ENCODE measurements at regions of chr2 and their contacts with region 1.

Region 1: DNA sequence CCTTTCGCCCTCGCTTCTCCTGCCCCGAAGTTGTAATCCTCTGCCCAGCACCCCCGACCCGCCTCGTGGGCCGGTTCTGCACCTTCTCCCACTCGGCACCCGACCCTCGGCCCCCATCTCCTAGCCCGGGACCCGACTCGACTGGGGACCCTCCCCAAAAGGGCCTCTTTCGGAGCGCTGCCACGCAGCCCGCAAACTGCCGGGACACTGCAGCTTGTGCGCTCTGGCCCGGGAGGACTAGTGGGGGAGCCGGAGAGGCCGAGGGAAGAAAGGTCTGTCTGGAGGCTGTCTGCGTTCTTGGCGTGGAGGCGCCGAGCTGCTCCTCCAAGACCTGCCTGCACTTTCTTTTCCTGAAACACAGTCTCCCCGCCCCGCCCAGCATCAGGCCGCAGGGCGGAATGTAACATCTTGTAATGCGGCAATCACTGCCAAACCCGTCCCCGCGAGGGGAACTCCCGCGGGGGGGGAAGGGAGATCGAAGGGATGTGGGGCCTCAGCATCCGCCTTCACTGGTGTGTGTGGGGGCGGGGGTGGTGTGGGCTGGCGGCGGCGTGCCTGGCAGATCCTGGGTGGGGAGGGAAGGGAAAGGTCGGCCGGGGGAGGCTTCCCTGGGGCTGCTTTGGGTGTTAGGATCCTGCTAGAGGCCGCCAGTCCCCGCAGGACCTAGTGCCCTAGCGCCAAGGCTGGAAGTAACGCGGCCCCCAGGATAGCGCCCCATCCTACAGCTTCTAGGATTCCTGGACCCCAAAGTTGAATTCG is 7.4 kb downstream of the DLX2 start:
- DNase-seq: peak; percentile 91
- ATAC-seq: peak; percentile 47
- H3K4me3 ChIP-seq: peak overlapping the region; percentile 97
- H3K27ac ChIP-seq: peak overlapping the region; percentile 93
- H3K4me1 ChIP-seq: peaks cover 31% of the 10 kb centered on the region
- H3K27me3 ChIP-seq: no peaks in the 10 kb centered on the region
- CTCF ChIP-seq: no peak

Region 2: GRCh38 chr2:171811245-171811628 is 284.1 kb before region 1 on chr2:
- CTCF ChIA-PET with region 1: no interaction called
- POLR2A ChIA-PET with region 1: no interaction called
- intact Hi-C with region 1: no loop called
- DNase-seq: peak; percentile 57
- ATAC-seq: peak; percentile 82
- H3K4me3 ChIP-seq: no peak overlapping the region
- H3K27ac ChIP-seq: no peak overlapping the region
- H3K4me1 ChIP-seq: no peaks in the 10 kb centered on the region
- H3K27me3 ChIP-seq: no peaks in the 10 kb centered on the region
- CTCF ChIP-seq: peak; percentile 61

Region 3: DNA sequence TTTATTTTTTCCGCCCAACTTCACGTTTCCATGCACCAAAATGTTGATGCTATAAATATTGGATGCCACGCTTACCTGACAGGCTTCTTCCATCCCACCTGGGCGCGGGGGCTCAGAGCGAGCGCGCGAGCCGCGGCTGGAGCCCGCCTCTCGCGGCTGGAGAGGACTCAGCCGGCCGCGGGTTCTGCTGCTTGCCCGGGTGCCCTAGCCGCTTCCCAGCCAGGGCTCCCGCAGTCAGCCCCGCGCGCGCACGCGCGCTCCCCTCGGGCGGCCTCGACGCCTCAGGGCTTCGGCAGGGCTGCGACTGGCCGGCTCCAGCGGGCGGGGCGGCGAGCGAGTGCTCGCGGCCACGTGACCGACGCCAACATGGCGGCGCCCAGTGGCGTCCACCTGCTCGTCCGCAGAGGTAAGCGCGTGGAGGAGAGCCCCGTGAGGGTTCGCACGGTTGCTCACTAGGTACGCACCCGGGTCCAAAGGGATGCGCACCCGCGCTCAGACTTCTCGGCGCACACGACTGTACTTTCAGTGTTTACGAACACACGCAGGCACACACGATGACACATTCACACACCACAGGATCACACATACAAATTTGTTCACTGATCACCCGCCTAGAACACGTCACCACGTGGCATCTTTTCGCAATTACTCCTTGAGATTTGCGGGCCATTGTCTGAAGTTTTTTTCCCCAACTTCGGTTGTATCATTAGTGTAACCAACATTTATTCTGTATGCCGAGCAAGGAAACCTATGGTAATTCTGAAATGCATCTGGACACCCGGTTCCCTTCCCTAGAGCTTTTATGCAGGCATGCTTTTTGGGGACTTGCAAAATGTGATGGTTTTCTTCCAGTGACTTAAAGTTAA is 95.5 kb before region 1 on chr2 and contains the start of gene METAP1D:
- CTCF ChIA-PET with region 1: no interaction called
- POLR2A ChIA-PET with region 1: interaction called, 4 read pairs
- intact Hi-C with region 1: loop called (anchors 2 kb)
- DNase-seq: peak; percentile 94
- ATAC-seq: peak; percentile 93
- H3K4me3 ChIP-seq: peak within 1 kb of the TSS; percentile 74
- H3K27ac ChIP-seq: peak within 1 kb of the TSS; percentile 70
- H3K4me1 ChIP-seq: peaks cover 16% of the 10 kb centered on the region
- H3K27me3 ChIP-seq: no peaks in the 10 kb centered on the region
- CTCF ChIP-seq: no peak
- total RNA-seq, gene METAP1D: 7.3 and 12.0 TPM in 2 replicates

Region 4: DNA sequence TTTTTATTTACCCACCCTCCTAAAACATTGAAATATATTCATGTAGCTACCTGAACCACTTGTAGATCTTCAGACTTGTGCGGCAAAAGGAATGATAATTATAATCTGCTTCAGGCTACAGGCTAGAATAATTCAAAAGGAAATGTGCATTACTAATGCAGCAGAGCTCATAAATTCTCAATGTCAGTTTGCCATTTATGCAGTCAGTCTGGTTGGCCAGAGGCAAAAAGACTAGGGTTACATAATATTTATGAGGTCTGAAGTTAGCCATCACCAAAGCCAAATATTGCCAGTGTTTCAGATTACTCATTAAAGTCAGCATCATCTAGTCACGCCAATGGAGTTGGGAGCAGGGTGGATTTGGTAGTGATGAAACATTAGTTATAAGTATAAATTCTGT is 56.7 kb before region 1 on chr2:
- CTCF ChIA-PET with region 1: no interaction called
- POLR2A ChIA-PET with region 1: no interaction called
- intact Hi-C with region 1: loop called (anchors 2 kb)
- DNase-seq: peak; percentile 95
- ATAC-seq: peak; percentile 96
- H3K4me3 ChIP-seq: no peak overlapping the region
- H3K27ac ChIP-seq: peak overlapping the region; percentile 65
- H3K4me1 ChIP-seq: peaks cover 18% of the 10 kb centered on the region
- H3K27me3 ChIP-seq: no peaks in the 10 kb centered on the region
- CTCF ChIP-seq: no peak

Region 5: DNA sequence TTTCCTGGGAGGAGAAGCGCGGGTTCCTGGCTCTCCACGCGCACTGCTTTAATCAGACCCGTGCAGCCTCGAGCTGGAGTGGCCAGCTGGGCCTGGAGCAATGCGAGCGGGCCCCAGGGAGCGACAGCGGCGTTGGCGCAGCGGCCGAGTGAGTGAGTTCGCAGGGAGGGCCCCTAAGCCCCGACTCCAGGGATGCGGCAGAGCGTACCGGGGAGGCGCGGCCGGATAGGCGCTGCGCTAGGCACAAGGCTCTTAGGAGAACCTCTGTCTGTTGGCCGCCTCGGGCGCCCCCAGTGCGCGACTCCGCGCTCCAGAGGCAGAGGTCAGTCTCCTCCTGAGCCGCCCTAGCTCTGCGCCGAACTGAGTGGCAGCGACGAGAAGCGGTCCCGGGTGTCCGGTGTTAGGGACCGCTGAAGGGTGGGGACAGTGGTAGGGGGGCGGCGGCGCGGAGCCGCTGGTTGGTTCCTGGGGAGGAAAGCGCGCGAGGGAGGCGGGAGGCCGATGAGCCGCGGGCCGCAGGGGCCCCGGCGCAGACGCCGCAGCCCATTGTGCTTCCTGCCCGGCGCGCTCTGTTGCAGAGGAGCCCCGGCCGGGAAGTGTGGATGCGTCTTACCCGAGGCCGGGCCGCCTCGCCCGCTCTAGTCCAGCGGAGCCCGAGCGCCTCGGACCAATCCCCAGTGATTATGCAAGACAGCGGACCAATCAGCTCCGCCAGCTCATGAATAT is 10.4 kb before region 1 on chr2:
- CTCF ChIA-PET with region 1: interaction called, 3 read pairs
- POLR2A ChIA-PET with region 1: interaction called, 5 read pairs
- intact Hi-C with region 1: loop called (anchors 1 kb)
- DNase-seq: peak; percentile 96
- ATAC-seq: peak; percentile 90
- H3K4me3 ChIP-seq: peak overlapping the region; percentile 94
- H3K27ac ChIP-seq: peak overlapping the region; percentile 60
- H3K4me1 ChIP-seq: peaks cover 16% of the 10 kb centered on the region; the same call in 1 of the 2 replicates
- H3K27me3 ChIP-seq: no peaks in the 10 kb centered on the region
- CTCF ChIP-seq: no peak

Measured in PC-3 (cell line).